ENCODE measurements at regions of chr1 and their contacts with region 1.

Region 1: DNA sequence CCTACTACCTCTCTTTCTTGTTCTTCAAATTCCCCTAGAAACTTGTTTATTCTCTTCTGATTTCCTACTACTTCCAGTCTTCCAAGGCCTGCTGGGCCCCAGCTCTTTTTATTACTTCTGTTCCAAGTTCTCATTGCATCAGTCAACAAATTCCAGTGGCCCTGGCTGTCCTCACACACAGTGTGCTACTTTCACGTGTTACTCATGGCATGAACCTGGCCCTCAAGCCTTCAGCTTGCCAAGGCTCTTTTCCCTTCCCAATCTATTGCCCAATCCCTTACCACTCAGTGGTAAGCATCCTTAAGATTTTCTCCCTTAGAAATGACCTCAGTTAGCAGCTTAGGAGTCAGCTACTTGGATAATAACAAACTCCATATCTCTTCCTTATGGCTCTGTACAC is 613.5 kb downstream of the LMO4 start:
- DNase-seq: no peak
- ATAC-seq: no peak
- H3K4me3 ChIP-seq: no peak overlapping the region
- H3K27ac ChIP-seq: no peak overlapping the region
- H3K4me1 ChIP-seq: no peaks in the 10 kb centered on the region
- H3K27me3 ChIP-seq: no peaks in the 10 kb centered on the region
- CTCF ChIP-seq: no peak
- POLR2A ChIP-seq: no peak
- RAD21 ChIP-seq: no peak

Region 2: DNA sequence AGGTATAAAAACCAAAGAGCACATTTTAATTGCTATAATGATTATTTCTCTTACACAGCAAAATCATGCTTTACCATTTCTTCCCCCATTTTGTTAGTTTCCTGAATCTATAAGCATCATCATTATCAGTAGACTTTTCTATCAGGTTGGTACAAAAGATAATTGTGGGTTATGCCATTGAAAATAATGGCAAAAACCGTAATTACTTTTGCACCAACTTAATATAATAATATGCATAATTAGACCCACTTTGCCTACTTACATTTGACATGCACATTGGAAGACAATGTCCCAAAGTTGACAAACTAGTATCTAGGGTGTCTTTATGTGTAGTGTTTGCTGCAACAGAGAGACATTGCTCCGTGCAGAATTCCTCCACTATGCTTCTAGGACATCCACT is 19.3 kb before region 1 on chr1:
- CTCF ChIA-PET with region 1: no interaction called
- POLR2A ChIA-PET with region 1: no interaction called
- RAD21 ChIA-PET with region 1: no interaction called
- intact Hi-C with region 1: loop called (anchors 2 kb)
- DNase-seq: no peak
- ATAC-seq: no peak
- H3K4me3 ChIP-seq: no peak overlapping the region
- H3K27ac ChIP-seq: no peak overlapping the region
- H3K4me1 ChIP-seq: no peaks in the 10 kb centered on the region
- H3K27me3 ChIP-seq: no peaks in the 10 kb centered on the region
- CTCF ChIP-seq: no peak
- POLR2A ChIP-seq: no peak
- RAD21 ChIP-seq: no peak

Measured in HCT116 (cell line).